Activated CD4-positive, alpha-beta memory T cell treated with anti-CD3 and anti-CD28 coated beads, Interleukin-2, amount 10 ng/mL, durations not matched to agents 7 days and 5 days (primary cell): ENCODE measurements at regions of chr15 and their contacts with region 1.

Region 1: GRCh38 chr15:59917504-59918157 is 86.5 kb upstream of the FOXB1 start:
- DNase-seq: peak; percentile 84
- H3K4me3 Mint-ChIP-seq: no peak overlapping the region
- H3K27ac Mint-ChIP-seq: no peak overlapping the region
- H3K4me1 Mint-ChIP-seq: peaks cover 31% of the 10 kb centered on the region
- H3K27me3 Mint-ChIP-seq: peaks cover 26% of the 10 kb centered on the region

Region 2: DNA sequence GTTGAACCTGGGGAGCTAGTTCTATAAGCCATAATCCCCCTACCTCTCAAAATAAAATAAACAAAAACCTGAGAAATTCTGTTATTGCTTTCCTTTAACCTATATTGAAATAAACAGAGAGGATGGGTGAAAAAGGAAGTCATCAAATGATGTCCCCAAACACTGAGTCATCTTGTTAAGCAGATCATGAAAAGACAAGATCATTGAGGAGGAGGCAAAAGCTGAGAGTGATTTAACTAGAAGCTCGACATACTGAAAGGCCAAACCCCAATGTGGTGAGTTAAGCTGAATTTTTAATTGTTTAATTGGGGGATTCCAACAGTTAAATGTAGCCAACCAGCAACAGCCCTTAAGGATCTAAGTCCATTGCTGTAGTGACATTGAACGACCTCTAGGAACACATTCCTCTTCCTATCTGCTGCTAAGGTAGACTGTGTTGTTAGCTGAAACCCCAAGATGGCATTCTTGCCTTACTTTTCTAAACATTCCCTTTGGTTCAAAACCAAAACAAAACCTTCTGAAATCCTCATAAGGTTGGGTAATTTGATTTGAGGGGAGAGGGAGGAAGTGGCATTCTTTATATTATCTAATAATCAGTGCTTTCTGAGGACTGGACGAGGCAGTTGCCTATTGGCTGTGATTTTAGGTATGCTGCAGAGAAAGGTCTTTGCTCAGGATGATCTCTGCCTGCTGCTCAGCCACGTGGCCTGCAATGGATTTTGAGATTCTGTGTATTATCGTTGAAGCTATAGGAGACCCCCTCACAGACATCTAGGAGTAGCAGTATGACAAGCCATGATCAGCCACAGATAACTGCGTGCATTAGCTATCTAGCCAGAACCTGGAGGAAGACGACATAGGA is 165.8 kb before region 1 on chr15:
- CTCF ChIA-PET with region 1: interaction called, 16 read pairs
- POLR2A ChIA-PET with region 1: interaction called, 3 read pairs
- DNase-seq: no peak
- H3K4me3 Mint-ChIP-seq: no peak overlapping the region
- H3K27ac Mint-ChIP-seq: no peak overlapping the region
- H3K4me1 Mint-ChIP-seq: peaks cover 12% of the 10 kb centered on the region
- H3K27me3 Mint-ChIP-seq: peaks cover 9% of the 10 kb centered on the region

Region 3: GRCh38 chr15:59764775-59765174 is 152.9 kb before region 1 on chr15:
- CTCF ChIA-PET with region 1: no interaction called
- POLR2A ChIA-PET with region 1: no interaction called
- DNase-seq: no peak
- H3K4me3 Mint-ChIP-seq: no peak overlapping the region
- H3K27ac Mint-ChIP-seq: no peak overlapping the region
- H3K4me1 Mint-ChIP-seq: peaks cover 3% of the 10 kb centered on the region
- H3K27me3 Mint-ChIP-seq: peaks cover 7% of the 10 kb centered on the region

Region 4: DNA sequence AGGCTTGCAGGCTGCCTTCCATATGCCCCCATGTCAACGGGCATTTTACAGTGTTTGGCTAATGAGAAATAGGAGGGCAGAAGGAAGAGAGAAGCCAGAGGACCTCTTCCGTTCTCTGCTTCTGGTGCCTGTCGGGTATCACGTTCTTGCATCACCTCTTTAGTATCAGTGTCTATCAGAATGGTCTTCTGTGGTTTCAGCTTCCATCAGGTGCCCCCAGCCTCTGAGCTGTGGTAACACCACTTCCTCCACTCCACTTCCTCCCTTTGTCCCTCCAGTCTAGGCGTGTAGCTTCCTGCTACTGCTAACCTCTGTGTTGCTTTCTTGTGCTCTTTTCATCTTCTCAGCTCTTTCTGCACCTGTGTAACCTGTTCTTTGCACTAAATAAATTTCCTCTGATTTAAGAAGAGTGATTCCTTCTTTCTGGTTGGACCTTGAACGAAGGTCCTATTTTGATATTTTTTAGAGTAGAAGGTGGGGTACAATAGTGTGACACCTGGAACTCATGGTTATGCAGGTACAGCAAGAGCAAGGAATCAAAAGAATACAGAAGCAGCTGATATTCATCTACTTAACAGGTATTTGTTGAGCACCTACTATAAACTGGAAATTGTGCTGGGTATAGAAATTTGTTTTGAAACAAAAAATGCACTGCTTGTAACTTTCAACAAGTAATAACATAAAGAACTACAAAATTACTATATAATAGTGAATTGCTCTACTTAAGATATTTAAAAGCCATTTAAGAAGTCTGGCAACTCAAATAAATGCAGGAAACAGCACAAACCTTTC is 59.0 kb after region 1 on chr15:
- CTCF ChIA-PET with region 1: interaction called, 10 read pairs
- POLR2A ChIA-PET with region 1: interaction called, 3 read pairs
- DNase-seq: peak; percentile 87
- H3K4me3 Mint-ChIP-seq: peak overlapping the region; percentile 55
- H3K27ac Mint-ChIP-seq: peak overlapping the region; percentile 90
- H3K4me1 Mint-ChIP-seq: peaks cover 40% of the 10 kb centered on the region
- H3K27me3 Mint-ChIP-seq: peaks cover 10% of the 10 kb centered on the region

Region 5: DNA sequence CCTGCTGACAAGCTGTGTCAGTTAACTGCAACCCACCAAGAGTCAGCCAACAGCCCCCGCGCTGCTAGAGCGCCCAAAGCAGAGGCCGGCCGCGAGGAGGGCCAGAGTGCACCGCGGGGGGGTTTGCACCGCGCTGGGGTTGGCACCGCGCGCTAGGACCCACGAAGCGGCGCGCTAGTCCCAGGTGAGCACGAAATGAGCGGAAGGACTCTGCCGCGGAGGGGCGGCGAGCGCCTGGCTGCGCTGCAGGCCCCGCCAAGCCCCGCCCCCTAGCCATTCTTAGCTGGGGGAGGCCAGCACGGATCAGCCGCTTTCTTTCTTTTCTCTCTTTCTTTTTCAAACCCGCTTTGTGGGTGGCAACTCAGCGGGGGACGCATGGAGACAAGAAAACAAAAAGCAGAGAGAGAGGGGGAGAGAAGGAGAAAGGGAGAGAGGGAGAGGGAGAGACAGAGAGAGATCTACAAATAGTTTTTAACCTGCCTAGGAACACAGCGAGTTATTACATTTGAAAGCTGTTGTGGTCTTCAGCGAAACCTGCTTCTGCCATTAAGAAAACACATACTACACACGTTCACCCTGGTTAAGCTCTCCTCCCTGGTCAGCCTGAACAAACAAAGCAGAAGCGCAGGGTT is 79.6 kb after region 1 on chr15:
- CTCF ChIA-PET with region 1: interaction called, 43 read pairs
- POLR2A ChIA-PET with region 1: interaction called, 5 read pairs
- DNase-seq: peak; percentile 81
- H3K4me3 Mint-ChIP-seq: peak overlapping the region; percentile 67
- H3K27ac Mint-ChIP-seq: peak overlapping the region; percentile 20
- H3K4me1 Mint-ChIP-seq: peaks cover 77% of the 10 kb centered on the region
- H3K27me3 Mint-ChIP-seq: peaks cover 99% of the 10 kb centered on the region

Region 6: DNA sequence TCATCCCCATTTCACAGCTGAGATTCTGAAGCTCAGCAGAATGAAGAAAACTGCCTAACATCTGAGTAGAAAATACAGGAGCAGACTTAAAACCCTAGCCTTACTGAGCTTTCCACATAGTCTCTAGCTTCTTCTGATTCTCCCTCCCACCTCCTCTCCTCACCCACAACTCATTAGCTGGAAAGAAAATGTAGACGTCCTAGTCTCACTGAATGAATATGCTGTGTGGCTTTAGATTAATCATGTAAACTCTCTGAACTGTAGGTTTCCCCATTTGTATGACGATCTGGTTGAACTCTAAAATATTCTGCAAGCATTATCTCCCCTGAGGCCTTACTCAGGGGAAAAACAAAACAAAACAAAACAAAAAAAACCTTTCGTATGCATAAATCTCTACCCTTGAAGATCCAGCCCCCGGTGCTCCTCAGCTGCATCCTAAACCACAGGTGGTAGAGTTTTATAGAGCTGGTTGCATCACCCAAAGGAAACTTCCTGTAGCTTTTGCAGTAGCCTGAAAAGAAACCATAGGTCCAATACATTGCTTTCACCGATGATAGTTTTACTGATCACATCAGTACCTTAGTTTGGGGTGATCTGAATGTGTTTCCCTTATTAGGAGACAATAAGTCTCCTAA is 127.1 kb after region 1 on chr15:
- CTCF ChIA-PET with region 1: interaction called, 11 read pairs
- POLR2A ChIA-PET with region 1: no interaction called
- DNase-seq: peak; percentile 55
- H3K4me3 Mint-ChIP-seq: peak overlapping the region; percentile 54
- H3K27ac Mint-ChIP-seq: peak overlapping the region; percentile 75
- H3K4me1 Mint-ChIP-seq: peaks cover 25% of the 10 kb centered on the region
- H3K27me3 Mint-ChIP-seq: peaks cover 7% of the 10 kb centered on the region

Region 7: DNA sequence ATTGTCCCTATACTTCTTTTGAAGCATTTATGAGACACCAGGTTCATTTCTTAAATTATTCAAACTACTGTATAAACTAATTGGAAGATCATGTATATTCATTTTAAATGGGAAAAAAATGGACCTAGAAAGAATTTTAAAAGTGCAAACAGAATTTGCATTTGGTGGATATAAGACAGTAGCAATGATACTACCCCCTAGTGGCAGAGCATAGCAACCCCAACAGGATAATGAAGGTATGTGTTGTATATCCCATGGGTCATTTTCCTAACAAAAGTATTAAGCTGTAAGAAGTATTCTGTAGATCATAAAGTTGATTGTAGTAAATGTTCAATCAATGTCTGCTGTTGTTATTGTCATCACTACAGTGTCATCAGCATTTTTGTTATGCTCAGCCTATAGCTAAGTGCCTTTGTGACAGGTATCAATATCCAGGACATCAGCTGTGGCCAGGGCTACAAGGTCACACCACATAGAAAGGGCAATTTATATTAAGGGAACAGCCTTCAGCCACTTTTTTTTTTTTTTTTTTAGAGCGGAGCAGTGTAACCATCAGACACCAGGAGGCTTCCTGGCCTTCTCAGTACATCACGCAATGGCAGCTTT is 262.3 kb after region 1 on chr15:
- CTCF ChIA-PET with region 1: interaction called, 69 read pairs
- POLR2A ChIA-PET with region 1: no interaction called
- DNase-seq: peak; percentile 35
- H3K4me3 Mint-ChIP-seq: no peak overlapping the region
- H3K27ac Mint-ChIP-seq: no peak overlapping the region
- H3K4me1 Mint-ChIP-seq: no peaks in the 10 kb centered on the region
- H3K27me3 Mint-ChIP-seq: peaks cover 38% of the 10 kb centered on the region